CD8-positive, alpha-beta T cell (primary cell): ENCODE measurements at regions of chr21 and their contacts with region 1.

Region 1: GRCh38 chr21:34952701-34953100 is 96.4 kb downstream of the RUNX1 start:
- DNase-seq: no peak
- ATAC-seq: peak; percentile 34
- H3K4me3 ChIP-seq: no peak overlapping the region
- H3K4me3 Mint-ChIP-seq: no peak overlapping the region
- H3K27ac ChIP-seq: no peak overlapping the region
- H3K27ac Mint-ChIP-seq: peak overlapping the region; percentile 12
- H3K4me1 ChIP-seq: peaks cover 34% of the 10 kb centered on the region
- H3K4me1 Mint-ChIP-seq: peaks cover 81% of the 10 kb centered on the region
- H3K27me3 ChIP-seq: no peaks in the 10 kb centered on the region
- H3K27me3 Mint-ChIP-seq: no peaks in the 10 kb centered on the region
- CTCF ChIP-seq: no peak

Region 2: DNA sequence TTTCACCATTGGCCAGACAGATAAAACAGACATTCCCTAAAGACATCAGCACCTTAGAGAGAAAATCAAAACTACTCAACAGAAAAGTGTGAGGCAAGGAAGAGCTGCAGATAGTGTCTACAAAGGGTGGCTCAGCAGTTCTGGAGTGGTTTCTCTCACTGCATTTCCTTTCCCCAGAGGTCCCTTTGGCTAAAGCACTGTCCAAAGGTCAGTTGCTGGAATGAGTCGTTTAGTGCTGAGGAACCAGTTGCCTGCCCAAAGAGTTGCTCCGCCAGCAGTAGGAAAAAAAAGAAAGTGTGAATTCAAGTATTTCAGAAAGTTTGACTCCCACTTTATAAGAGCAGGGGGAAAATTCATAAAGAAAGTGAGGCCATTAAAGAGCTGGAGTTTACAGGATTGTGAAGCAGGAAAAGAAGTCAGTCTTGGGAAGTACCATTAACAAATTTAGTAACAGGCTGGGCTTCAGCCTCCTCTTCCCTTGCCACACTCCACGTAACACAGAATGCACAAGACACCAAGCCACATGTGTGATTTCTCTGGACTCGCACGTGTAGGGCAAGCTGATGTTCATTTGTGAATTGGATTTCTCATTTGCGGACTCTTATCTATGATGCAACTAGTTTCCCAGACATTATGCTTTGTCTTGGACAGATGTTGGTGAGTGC is 25.8 kb before region 1 on chr21:
- CTCF ChIA-PET with region 1: no interaction called
- POLR2A ChIA-PET with region 1: no interaction called
- intact Hi-C with region 1: loop called in 1 of 2 experiments (anchors 2 kb)
- DNase-seq: no peak
- ATAC-seq: no peak
- H3K4me3 ChIP-seq: no peak overlapping the region
- H3K4me3 Mint-ChIP-seq: no peak overlapping the region
- H3K27ac ChIP-seq: no peak overlapping the region
- H3K27ac Mint-ChIP-seq: peak overlapping the region; percentile 21
- H3K4me1 ChIP-seq: peaks cover 11% of the 10 kb centered on the region
- H3K4me1 Mint-ChIP-seq: peaks cover 72% of the 10 kb centered on the region
- H3K27me3 ChIP-seq: no peaks in the 10 kb centered on the region
- H3K27me3 Mint-ChIP-seq: no peaks in the 10 kb centered on the region
- CTCF ChIP-seq: no peak

Region 3: DNA sequence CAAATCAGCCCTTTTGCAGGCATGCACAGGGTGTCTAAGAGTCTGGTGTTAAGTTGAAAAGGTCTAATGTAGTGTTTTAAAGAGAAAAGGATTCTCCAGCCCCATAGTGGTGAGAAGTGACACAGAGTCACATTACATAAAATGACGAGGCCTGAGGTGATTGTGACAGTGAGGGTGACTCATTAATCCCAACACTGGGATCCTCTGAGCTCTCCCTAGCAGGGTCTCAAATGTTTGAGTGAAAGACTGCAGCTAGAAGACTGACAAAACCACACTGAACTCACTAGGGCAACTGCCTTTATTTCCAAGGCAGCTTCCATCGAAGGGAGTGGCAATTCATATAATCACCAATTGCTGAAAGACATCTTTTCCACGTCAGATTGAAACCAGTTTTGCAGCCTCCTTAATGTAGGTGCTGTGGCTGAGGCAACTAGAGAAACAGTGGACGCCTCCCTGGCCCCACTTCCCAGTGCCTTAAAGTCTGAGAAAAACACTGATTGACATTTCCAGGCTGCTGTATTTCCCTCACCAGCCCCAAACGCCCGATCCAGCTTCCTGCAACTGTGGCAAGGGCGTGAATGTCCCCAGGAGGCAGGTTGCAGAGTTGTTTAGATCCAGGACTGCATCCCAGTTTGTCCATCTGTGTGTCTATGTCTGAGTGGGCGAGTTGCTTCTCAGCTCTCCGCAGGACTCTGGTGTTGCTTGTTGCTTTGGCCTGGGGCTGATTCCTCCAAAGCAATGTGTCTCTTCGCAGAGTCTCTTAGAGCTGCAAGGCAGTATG is 15.0 kb after region 1 on chr21:
- CTCF ChIA-PET with region 1: interaction called, 3 read pairs
- POLR2A ChIA-PET with region 1: interaction called, 6 read pairs
- intact Hi-C with region 1: loop called in 1 of 2 experiments (anchors 2 kb)
- DNase-seq: peak in 3 of 9 experiments; percentile 31 to 32 (median 31)
- ATAC-seq: peak; percentile 61
- H3K4me3 ChIP-seq: no peak overlapping the region
- H3K4me3 Mint-ChIP-seq: peak overlapping the region; percentile 38
- H3K27ac ChIP-seq: no peak overlapping the region
- H3K27ac Mint-ChIP-seq: peak overlapping the region; percentile 90
- H3K4me1 ChIP-seq: peaks cover 69% of the 10 kb centered on the region
- H3K4me1 Mint-ChIP-seq: peaks cover 90% of the 10 kb centered on the region
- H3K27me3 ChIP-seq: no peaks in the 10 kb centered on the region
- H3K27me3 Mint-ChIP-seq: no peaks in the 10 kb centered on the region
- CTCF ChIP-seq: no peak

Region 4: GRCh38 chr21:35026617-35027562 is 74.2 kb after region 1 on chr21:
- CTCF ChIA-PET with region 1: no interaction called
- POLR2A ChIA-PET with region 1: no interaction called
- intact Hi-C with region 1: no loop called
- DNase-seq: peak; percentile 75 to 96 (median 88)
- ATAC-seq: peak; percentile 83
- H3K4me3 ChIP-seq: peak overlapping the region; percentile 32 to 39
- H3K4me3 Mint-ChIP-seq: peak overlapping the region; percentile 77
- H3K27ac ChIP-seq: peak overlapping the region; percentile 74 to 77
- H3K27ac Mint-ChIP-seq: peak overlapping the region; percentile 97
- H3K4me1 ChIP-seq: peaks cover 80% of the 10 kb centered on the region
- H3K4me1 Mint-ChIP-seq: peaks cover 89% of the 10 kb centered on the region
- H3K27me3 ChIP-seq: no peaks in the 10 kb centered on the region
- H3K27me3 Mint-ChIP-seq: no peaks in the 10 kb centered on the region
- CTCF ChIP-seq: no peak